Transverse colon (tissue), 4 donors: ENCODE measurements at regions of chr12 and their contacts with region 1.

Region 1: GRCh38 chr12:106914796-106915634 is 40.7 kb upstream of the TMEM263 start:
- DNase-seq: no peak
- H3K4me3 ChIP-seq: no peak overlapping the region
- H3K27ac ChIP-seq: no peak overlapping the region
- H3K4me1 ChIP-seq: peaks cover 0 to 4% (median 0%) of the 10 kb centered on the region in 4 donors
- H3K27me3 ChIP-seq: peaks cover 4% of the 10 kb centered on the region
- CTCF ChIP-seq: no peak
- EP300 ChIP-seq: no peak
- POLR2A ChIP-seq: no peak

Region 2: DNA sequence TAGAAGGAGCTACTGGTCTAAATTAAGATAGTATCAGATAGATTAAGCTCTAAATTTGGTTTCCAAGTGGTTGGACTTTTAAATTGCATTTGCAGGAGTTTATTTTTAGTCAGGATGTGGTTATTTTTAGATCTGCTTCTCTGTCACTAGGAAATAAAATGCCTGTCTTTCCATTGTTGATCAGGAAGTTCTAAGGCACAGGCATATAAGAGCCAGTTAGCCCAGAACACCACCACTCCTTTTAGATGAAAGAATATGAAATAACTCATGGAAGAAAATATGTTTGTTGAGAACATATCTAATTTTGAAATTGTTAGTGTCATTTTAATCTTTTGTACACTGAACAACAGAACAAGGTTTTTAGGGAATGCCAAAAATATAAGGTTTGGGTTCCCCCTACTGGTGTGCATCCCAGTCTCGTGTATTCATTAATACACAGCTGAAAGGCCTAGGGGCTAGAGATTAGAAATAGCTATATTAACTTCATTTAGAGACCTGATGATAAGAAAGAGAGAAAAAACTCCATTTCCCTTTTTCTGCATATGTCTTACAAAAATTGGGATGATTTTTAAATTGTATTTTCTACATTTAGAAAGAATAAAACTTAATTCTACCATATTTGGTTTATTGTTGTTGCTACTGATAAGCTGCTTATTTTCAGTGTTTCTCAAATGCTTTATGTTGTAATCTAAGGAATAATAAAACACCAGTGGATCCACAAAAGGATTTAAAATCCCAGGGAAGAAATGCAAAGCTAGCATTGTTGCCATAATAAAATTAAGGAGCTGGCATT is 73.3 kb before region 1 on chr12:
- in situ Hi-C with region 1: no loop called
- intact Hi-C with region 1: loop called (anchors 2 kb)
- DNase-seq: peak; percentile 29
- H3K4me3 ChIP-seq: no peak overlapping the region
- H3K27ac ChIP-seq: peak overlapping the region; percentile 2 to 46 (median 24)
- H3K4me1 ChIP-seq: peaks cover 19 to 38% (median 25%) of the 10 kb centered on the region in 4 donors
- H3K27me3 ChIP-seq: no peaks in the 10 kb centered on the region
- CTCF ChIP-seq: peak; percentile 55 to 61 (median 55)
- EP300 ChIP-seq: no peak
- POLR2A ChIP-seq: no peak